ENCODE measurements at regions of chr11 and their contacts with region 1.

Region 1: GRCh38 chr11:73493956-73494598 is 103.8 kb downstream of the FAM168A start:
- DNase-seq: peak; percentile 27
- H3K4me3 ChIP-seq: no peak overlapping the region
- H3K27ac ChIP-seq: no peak overlapping the region
- H3K27me3 ChIP-seq: no peaks in the 10 kb centered on the region
- CTCF ChIP-seq: no peak

Region 2: DNA sequence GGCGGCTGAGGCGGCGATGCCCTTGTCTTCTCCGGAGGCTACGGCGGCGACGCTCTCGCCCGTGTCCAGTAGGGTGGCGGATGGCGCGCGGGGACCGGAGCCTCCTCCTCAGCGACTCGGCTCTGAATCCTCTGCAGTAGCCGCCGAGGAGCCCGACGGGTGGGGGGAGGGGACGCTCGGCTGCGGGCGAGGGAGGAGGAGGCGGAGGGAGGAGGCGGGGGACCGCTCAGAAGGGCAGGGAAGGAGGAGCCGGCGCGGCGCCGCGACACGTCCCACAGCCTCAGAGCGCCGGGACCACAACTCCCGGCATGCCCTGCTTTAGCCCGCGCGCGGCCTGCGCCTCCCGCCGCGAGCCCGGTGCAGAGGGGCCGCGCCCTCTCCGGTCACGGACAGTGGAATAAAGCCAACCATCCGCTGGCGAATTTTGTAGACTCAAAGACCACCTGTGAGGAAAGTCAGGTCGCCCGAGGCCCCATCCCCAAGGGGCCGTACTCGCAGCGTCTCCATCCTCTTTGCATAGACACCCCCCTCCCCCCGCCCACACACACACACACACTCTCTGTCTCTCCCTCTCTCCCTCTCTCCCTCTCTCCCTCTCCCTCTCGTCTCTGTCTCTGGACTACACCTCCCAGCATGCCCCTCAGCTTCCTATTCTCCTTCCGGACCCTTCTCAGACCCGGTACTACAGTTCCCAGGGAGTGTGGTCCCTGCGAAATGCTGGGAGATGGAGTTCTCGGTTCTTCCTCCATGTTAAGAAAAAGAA is 104.1 kb after region 1 on chr11 and contains the start of gene FAM168A:
- CTCF ChIA-PET with region 1: interaction called, 10 read pairs
- POLR2A ChIA-PET with region 1: interaction called, 3 read pairs
- DNase-seq: peak; percentile 92
- H3K4me3 ChIP-seq: peak within 1 kb of the TSS; percentile 80
- H3K27ac ChIP-seq: peak within 1 kb of the TSS; percentile 43
- H3K27me3 ChIP-seq: no peaks in the 10 kb centered on the region
- CTCF ChIP-seq: no peak
- polyA plus RNA-seq, gene FAM168A: 21.3 and 23.6 TPM in 2 replicates